ENCODE measurements at regions of chr2 and their contacts with region 1.

Region 1: DNA sequence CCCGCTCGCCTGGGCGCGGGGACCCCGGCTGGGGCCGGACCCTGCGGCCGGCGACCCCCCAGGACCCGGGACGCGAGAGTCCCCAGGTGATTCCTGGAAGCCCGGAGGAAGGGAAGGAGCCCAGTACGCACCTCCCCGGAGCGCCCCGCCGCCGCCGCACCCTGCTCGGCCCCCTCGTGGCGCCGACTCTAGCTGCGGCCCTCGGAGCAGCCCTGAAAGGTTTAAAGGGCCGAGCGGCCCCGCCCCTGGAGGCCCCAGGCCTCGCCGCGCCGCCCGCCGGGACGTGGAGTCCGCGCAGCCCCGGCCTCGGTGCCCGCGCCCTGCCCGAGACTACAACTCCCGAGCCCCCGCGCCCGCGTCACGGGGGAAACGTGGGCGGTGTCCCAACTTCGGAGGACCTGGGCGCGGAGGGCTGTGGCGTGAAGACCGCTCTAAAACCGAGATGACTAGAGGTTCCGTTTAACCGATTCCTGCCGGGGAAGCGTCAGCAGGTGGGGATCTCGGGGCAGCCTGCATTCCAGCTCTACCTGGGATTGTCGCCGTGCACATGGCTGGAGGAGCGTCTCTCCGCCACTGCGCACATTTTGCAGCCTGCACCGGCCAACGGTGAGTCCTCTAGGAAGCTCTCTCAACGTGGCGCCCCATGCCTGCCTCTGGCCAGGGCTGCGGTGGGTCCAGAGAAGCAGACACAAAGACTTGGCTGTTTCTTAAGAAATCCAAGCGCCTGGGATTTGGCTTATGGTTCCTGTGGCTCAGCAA is at the start of gene TMEM150A:
- DNase-seq: peak; percentile 92 to 96
- H3K4me3 ChIP-seq: peak within 1 kb of the TSS; percentile 83
- H3K4me3 Mint-ChIP-seq: peak within 1 kb of the TSS; percentile 87
- H3K27ac Mint-ChIP-seq: peak within 1 kb of the TSS; percentile 81
- H3K4me1 ChIP-seq: peaks cover 12% of the 10 kb centered on the region; the same call in 1 of the 2 replicates
- H3K4me1 Mint-ChIP-seq: peaks cover 13% of the 10 kb centered on the region
- H3K27me3 ChIP-seq: no peaks in the 10 kb centered on the region
- H3K27me3 Mint-ChIP-seq: no peaks in the 10 kb centered on the region
- CTCF ChIP-seq: peak; percentile 47 to 55
- total RNA-seq, gene TMEM150A: 24.0 and 25.3 TPM in 2 replicates

Region 2: DNA sequence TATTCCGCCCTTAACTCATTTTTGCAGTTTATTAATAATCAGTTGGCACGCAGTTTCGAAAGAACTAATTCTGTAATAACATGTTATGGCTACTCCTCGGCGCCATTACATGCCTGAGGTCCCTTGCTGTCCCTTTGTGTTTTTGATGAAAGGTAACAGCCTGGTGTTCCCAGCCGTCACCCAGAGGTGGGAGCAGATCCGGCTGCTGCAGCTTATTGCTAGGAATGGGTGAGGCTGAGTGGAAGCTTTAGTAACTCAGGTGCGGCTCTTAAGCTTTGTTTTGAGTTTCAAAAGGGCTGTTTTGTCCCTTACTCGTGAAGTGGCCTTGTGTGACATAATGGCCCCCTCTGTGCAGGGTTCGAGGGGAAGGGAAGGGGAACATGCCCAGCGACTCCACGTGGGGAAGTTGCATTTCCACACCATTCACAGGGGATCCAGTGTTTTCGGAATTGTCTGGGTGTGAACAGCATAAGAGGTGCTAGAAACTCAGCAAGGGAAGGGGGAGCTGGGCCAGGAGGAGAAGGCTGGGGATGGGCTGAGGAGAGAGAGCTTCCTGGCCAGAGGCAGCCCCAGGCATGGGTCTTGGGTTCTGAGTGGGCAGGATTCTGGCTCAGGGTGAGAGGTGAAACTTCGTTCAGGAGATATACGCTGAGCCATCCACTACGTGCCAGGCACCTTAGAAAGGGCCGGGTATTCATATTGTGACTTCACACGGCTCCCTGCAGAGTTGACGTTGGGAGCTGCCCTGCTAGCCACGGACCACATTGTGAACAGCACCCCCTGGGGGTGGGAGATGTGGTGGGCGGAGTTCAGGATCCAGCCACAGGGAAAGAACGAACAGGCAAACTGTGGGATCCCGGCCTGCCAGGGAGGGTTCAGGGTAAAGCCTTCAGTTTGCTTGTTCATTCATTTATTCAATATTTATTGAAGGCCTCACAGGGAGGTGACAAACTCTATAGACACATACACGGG is 359.3 kb before region 1 on chr2:
- CTCF ChIA-PET with region 1: no interaction called
- POLR2A ChIA-PET with region 1: no interaction called
- intact Hi-C with region 1: no loop called
- DNase-seq: peak; percentile 50 to 68
- H3K4me3 ChIP-seq: no peak overlapping the region
- H3K4me3 Mint-ChIP-seq: no peak overlapping the region
- H3K27ac Mint-ChIP-seq: no peak overlapping the region
- H3K4me1 ChIP-seq: peaks cover under 1% of the 10 kb centered on the region; the same call in 1 of the 2 replicates
- H3K4me1 Mint-ChIP-seq: peaks cover 16% of the 10 kb centered on the region
- H3K27me3 ChIP-seq: no peaks in the 10 kb centered on the region
- H3K27me3 Mint-ChIP-seq: no peaks in the 10 kb centered on the region
- CTCF ChIP-seq: peak; percentile 39 to 61

Region 3: GRCh38 chr2:85531585-85531984 is 71.1 kb before region 1 on chr2:
- CTCF ChIA-PET with region 1: no interaction called
- POLR2A ChIA-PET with region 1: interaction called, 15 read pairs
- intact Hi-C with region 1: no loop called
- DNase-seq: no peak
- H3K4me3 ChIP-seq: no peak overlapping the region
- H3K4me3 Mint-ChIP-seq: no peak overlapping the region
- H3K27ac Mint-ChIP-seq: no peak overlapping the region
- H3K4me1 ChIP-seq: no peaks in the 10 kb centered on the region
- H3K4me1 Mint-ChIP-seq: peaks cover 14% of the 10 kb centered on the region
- H3K27me3 ChIP-seq: no peaks in the 10 kb centered on the region
- H3K27me3 Mint-ChIP-seq: peaks cover 2% of the 10 kb centered on the region
- CTCF ChIP-seq: no peak

Region 4: DNA sequence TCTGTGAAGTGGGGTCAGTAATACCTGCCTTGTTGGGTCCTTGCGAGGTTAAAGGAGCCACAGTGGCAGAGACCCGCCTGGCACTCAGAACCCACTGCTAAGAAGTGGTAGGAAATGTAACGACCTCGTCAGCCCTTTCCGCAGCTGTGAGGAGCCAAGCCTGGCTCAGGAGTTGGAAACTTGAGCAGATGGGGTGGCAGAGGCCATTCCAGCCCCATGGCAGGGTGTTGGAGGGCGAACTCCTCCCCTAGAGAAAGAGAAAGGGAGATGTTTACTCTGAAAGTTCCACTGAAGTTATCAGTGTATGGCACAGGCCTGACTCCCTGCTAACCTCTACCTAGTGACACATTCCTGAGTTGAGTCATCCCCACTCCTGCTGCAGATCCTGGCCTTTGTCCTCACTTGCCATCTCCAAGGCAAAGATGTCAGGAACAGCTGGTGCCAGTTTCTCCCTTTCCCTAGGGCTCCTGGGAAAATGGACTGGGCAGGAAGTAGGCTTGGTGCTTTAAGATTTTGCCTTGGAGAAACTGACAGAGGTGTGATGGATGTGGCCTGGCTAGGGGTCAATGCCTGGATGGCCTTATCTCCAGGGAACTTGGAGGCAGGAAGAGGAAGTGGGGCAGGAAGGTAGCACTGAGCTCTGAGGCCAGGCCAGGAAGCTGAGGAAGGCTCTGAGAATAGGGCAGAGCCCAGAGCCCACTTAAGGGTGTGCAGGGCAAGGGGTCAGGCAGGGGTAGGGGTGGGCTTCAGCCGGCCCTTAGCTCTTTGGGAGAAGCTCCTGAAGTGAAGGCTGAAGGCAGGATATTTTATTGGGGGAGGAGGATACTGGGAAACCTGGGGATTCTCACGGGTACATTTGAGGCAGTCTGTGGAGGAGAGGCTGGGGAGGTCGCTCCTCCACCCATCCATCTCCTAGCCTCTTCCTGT is 17.5 kb before region 1 on chr2:
- CTCF ChIA-PET with region 1: interaction called, 10 read pairs
- POLR2A ChIA-PET with region 1: interaction called, 5 read pairs
- intact Hi-C with region 1: loop called (anchors 1 kb)
- DNase-seq: peak; percentile 79 to 90
- H3K4me3 ChIP-seq: peak overlapping the region; percentile 47
- H3K4me3 Mint-ChIP-seq: peak overlapping the region; percentile 76
- H3K27ac Mint-ChIP-seq: peak overlapping the region; percentile 83
- H3K4me1 ChIP-seq: peaks cover 27% of the 10 kb centered on the region
- H3K4me1 Mint-ChIP-seq: peaks cover 34% of the 10 kb centered on the region
- H3K27me3 ChIP-seq: no peaks in the 10 kb centered on the region
- H3K27me3 Mint-ChIP-seq: peaks cover 10% of the 10 kb centered on the region
- CTCF ChIP-seq: no peak

Measured in Caco-2 (cell line).